WTC11 (cell line): ENCODE measurements at regions of chr12 and their contacts with region 1.

Region 1: DNA sequence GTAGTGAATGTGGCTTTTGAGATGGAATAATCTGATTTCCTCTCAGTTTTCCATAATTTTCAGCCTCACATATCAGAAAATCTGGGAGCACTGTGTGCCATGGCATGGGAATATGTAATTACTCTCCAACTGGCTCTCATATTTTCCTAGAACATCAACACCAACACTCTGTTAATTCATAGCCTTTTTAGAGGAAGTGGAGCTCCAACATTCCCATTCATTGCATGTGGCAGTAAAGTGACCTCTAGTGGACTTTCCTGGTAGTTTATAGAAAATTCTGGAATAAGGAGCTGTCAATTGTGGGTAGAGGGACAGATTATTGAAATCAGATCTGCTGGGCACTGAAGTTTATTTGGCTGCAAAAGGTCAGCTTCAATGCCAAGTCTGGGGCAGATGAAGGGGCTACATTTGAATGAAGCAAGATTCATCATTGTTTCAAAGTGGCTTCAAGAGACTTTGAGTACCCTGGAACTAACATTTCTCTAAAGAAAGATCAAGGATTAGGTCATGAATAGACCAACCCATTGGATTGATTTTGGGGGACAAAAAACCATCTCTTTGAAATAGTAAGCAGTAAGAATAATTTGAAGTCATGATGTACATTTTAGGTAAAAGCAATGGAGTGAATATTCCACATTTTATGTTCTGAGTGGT is 23.6 kb upstream of the USP44 start:
- DNase-seq: no peak
- ATAC-seq: peak; percentile 44
- H3K4me3 Mint-ChIP-seq: peak overlapping the region; percentile 57
- H3K27ac Mint-ChIP-seq: peak overlapping the region; percentile 97
- H3K4me1 Mint-ChIP-seq: peaks cover 42% of the 10 kb centered on the region
- H3K27me3 Mint-ChIP-seq: no peaks in the 10 kb centered on the region
- CTCF ChIP-seq: peak; percentile 52; the same call in 1 of the 2 replicates

Region 2: GRCh38 chr12:95412482-95413311 is 162.2 kb before region 1 on chr12:
- CTCF ChIA-PET with region 1: no interaction called
- POLR2A ChIA-PET with region 1: no interaction called
- DNase-seq: no peak
- ATAC-seq: no peak
- H3K4me3 Mint-ChIP-seq: no peak overlapping the region
- H3K27ac Mint-ChIP-seq: no peak overlapping the region
- H3K4me1 Mint-ChIP-seq: 0 out of 2 replicates have a peak, but pooled peaks cover 3% of the 10 kb centered on the region
- H3K27me3 Mint-ChIP-seq: no peaks in the 10 kb centered on the region
- CTCF ChIP-seq: no peak

Region 3: DNA sequence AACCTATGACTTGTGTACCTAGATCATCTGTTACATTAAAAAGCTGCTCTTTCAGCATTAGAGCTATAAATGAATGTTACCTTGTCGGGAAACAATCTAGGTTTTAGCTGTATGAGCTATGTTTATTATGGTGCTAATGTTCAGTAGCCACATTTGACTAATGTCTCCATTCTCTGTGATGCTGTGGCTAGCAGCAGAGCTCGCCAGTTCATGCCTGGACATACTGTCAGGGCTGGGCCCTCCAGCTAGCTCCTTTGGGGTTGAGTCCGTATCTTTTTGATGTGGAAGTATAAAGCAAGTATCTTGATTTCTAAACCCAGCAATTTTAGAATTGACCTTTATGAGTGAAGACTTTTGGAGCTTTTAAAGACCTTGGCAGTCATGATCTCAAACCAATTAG is 59.7 kb before region 1 on chr12:
- CTCF ChIA-PET with region 1: interaction called, 10 read pairs
- POLR2A ChIA-PET with region 1: no interaction called
- DNase-seq: no peak
- ATAC-seq: no peak
- H3K4me3 Mint-ChIP-seq: no peak overlapping the region
- H3K27ac Mint-ChIP-seq: peak overlapping the region; percentile 93
- H3K4me1 Mint-ChIP-seq: no peaks in the 10 kb centered on the region
- H3K27me3 Mint-ChIP-seq: no peaks in the 10 kb centered on the region
- CTCF ChIP-seq: no peak

Region 4: GRCh38 chr12:95548056-95548538 is 26.8 kb before region 1 on chr12:
- CTCF ChIA-PET with region 1: interaction called, 11 read pairs
- POLR2A ChIA-PET with region 1: interaction called, 8 read pairs
- DNase-seq: peak; percentile 67
- ATAC-seq: peak; percentile 9
- H3K4me3 Mint-ChIP-seq: peak overlapping the region; percentile 91
- H3K27ac Mint-ChIP-seq: peak overlapping the region; percentile 91
- H3K4me1 Mint-ChIP-seq: peaks cover 48% of the 10 kb centered on the region
- H3K27me3 Mint-ChIP-seq: no peaks in the 10 kb centered on the region
- CTCF ChIP-seq: no peak

Region 5: DNA sequence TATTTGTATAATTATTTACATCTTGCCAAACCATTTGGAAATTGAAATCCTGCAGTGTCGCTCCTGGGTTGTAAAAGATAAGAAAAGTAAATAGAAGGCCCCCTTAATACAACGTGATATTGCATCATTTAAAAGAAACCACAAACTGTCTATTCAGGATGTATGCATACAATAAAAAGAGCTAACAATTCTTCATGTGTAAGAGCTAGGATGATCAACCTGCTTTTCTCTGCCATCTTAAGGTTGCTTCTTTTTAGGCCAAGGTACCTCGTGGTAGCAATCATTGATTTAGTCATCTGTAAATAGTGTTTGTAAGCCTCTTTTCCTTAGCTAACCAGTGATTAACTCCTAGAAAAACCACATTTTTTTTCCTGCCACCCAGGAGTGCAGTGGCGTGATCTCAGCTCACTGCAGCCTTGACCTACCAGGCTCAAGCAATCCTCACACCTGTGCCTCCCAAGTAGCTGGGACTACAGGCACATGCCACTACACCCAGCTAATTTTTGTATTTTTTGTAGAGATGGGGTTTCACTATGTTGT is 20.3 kb before region 1 on chr12:
- CTCF ChIA-PET with region 1: interaction called, 16 read pairs
- POLR2A ChIA-PET with region 1: no interaction called
- DNase-seq: no peak
- ATAC-seq: no peak
- H3K4me3 Mint-ChIP-seq: no peak overlapping the region
- H3K27ac Mint-ChIP-seq: peak overlapping the region; percentile 3; the same call in 1 of the 2 replicates
- H3K4me1 Mint-ChIP-seq: peaks cover 40% of the 10 kb centered on the region
- H3K27me3 Mint-ChIP-seq: no peaks in the 10 kb centered on the region
- CTCF ChIP-seq: no peak